Activated naive CD4-positive, alpha-beta T cell treated with anti-CD3 and anti-CD28 coated beads for 36 hours (primary cell): ENCODE measurements at regions of chr14 and their contacts with region 1.

Region 1: GRCh38 chr14:67111022-67111421 is 78.2 kb upstream of the GARIN2 start:
- DNase-seq: no peak
- H3K4me3 Mint-ChIP-seq: no peak overlapping the region
- H3K27ac Mint-ChIP-seq: no peak overlapping the region
- H3K4me1 Mint-ChIP-seq: no peaks in the 10 kb centered on the region
- H3K27me3 Mint-ChIP-seq: no peaks in the 10 kb centered on the region

Region 2: DNA sequence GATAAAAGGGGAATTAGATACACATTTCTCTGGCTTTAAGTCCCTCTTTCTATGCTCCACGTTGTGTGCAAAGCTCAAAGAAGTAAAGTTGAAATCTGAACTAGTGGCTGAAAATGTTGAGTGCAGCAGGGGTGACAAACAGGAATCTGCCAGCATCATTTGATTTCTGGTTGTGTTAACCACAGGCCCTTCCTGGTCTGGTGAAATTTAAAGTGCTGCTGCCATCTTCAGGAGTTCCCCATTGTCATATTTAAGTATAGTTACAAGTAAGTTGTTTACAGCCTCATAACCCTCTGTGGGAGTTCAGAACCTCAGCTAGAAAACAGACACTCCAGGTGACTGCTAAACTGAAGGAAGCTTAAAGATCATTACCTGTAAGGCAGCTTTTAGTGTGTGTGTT is 715.7 kb before region 1 on chr14:
- CTCF ChIA-PET with region 1: no interaction called
- intact Hi-C with region 1: loop called (anchors 5 kb)
- DNase-seq: peak; percentile 62
- H3K4me3 Mint-ChIP-seq: no peak overlapping the region
- H3K27ac Mint-ChIP-seq: no peak overlapping the region
- H3K4me1 Mint-ChIP-seq: peaks cover 12% of the 10 kb centered on the region
- H3K27me3 Mint-ChIP-seq: no peaks in the 10 kb centered on the region

Region 3: GRCh38 chr14:67031920-67032774 is 78.9 kb before region 1 on chr14:
- CTCF ChIA-PET with region 1: no interaction called
- intact Hi-C with region 1: no loop called
- DNase-seq: no peak
- H3K4me3 Mint-ChIP-seq: no peak overlapping the region
- H3K27ac Mint-ChIP-seq: no peak overlapping the region
- H3K4me1 Mint-ChIP-seq: no peaks in the 10 kb centered on the region
- H3K27me3 Mint-ChIP-seq: no peaks in the 10 kb centered on the region